ENCODE measurements at regions of chr22 and their contacts with region 1.

Region 1: DNA sequence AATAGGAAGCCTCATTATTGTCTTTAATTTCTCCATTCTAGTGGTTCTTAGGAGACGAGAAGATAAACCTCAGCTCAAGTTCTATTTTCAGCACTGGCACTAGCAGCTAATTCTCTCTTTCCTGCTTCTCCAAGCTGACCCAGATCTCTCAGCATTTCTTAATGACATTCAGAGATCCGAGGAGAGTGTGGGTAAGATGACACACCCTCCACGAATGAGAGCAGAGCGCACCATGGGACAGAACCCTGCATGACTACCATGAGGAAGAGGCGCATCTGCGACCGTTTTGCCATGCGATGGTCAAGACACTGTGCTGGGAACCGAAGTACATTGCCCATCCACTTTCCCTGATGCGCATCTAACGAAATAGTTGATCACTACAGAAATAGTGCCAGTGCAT is 241.8 kb downstream of the LARGE1 start:
- DNase-seq: no peak
- ATAC-seq: no peak
- H3K4me3 ChIP-seq: no peak overlapping the region
- H3K27ac ChIP-seq: no peak overlapping the region
- H3K4me1 ChIP-seq: no peaks in the 10 kb centered on the region
- H3K27me3 ChIP-seq: no peaks in the 10 kb centered on the region
- CTCF ChIP-seq: no peak
- POLR2A ChIP-seq: no peak
- RAD21 ChIP-seq: no peak

Region 2: GRCh38 chr22:33299245-33299956 is 379.1 kb before region 1 on chr22:
- CTCF ChIA-PET with region 1: no interaction called
- POLR2A ChIA-PET with region 1: no interaction called
- RAD21 ChIA-PET with region 1: no interaction called
- intact Hi-C with region 1: no loop called
- DNase-seq: no peak
- ATAC-seq: no peak
- H3K4me3 ChIP-seq: no peak overlapping the region
- H3K27ac ChIP-seq: no peak overlapping the region
- H3K4me1 ChIP-seq: no peaks in the 10 kb centered on the region
- H3K27me3 ChIP-seq: no peaks in the 10 kb centered on the region
- CTCF ChIP-seq: no peak
- POLR2A ChIP-seq: no peak
- RAD21 ChIP-seq: no peak

Region 3: GRCh38 chr22:33625959-33626358 is 52.6 kb before region 1 on chr22:
- CTCF ChIA-PET with region 1: no interaction called
- POLR2A ChIA-PET with region 1: no interaction called
- RAD21 ChIA-PET with region 1: no interaction called
- intact Hi-C with region 1: loop called (anchors 5 kb)
- DNase-seq: no peak
- ATAC-seq: no peak
- H3K4me3 ChIP-seq: no peak overlapping the region
- H3K27ac ChIP-seq: no peak overlapping the region
- H3K4me1 ChIP-seq: no peaks in the 10 kb centered on the region
- H3K27me3 ChIP-seq: no peaks in the 10 kb centered on the region
- CTCF ChIP-seq: no peak
- POLR2A ChIP-seq: no peak
- RAD21 ChIP-seq: no peak